Ascending aorta (tissue), 2 donors: ENCODE measurements at regions of chr5 and their contacts with region 1.

Region 1: DNA sequence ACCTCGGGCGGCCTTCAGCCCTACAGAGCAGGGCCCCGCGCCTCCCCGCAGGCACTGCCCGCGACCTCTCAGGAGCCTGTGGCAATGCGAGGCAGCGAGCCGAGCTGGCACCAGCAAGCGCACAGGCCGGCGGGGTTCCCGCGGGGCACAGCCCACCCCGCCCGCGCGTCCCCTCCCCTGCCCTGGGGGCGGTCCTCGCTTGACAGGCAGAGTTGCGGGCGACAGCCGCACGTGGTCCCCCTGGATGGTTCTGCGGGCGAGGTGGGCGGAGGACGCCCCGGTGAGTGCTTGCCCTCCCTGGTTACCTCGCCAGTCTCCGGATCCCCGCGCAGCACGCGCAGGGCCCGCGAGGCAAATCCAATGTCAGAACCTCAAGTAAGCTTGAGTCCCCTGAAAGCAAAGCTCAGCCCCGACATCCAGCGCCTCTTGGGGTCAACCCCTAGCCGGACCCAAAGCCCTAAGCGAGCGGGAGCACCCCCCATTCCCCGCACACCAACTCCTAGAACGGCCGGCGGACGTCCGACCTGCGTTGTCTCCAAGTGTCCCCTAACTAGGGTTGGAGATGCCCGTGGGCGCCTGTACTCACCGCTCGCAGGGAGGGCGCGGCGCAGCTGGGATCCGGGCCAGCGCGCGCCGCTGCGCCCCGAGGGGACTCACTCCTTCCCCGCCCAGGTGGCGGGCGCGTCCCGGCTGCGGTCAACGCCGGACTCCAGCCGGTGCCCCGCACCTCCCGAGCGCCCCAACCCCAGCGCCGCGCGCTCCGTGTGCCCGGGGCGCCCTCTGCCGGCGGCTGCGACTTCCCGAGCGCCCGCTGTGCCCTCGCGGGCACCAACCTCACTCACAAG is at the start of gene DRD1:
- DNase-seq: no peak
- H3K4me3 ChIP-seq: peak within 1 kb of the TSS; percentile 62 to 73
- H3K27ac ChIP-seq: no peak within 1 kb of the TSS
- H3K4me1 ChIP-seq: peaks cover 3 to 5% of the 10 kb centered on the region in 2 donors
- H3K27me3 ChIP-seq: peaks cover 6% of the 10 kb centered on the region
- CTCF ChIP-seq: peak; percentile 57 to 71 (median 68)
- total RNA-seq, gene DRD1: 0.11 TPM

Region 2: DNA sequence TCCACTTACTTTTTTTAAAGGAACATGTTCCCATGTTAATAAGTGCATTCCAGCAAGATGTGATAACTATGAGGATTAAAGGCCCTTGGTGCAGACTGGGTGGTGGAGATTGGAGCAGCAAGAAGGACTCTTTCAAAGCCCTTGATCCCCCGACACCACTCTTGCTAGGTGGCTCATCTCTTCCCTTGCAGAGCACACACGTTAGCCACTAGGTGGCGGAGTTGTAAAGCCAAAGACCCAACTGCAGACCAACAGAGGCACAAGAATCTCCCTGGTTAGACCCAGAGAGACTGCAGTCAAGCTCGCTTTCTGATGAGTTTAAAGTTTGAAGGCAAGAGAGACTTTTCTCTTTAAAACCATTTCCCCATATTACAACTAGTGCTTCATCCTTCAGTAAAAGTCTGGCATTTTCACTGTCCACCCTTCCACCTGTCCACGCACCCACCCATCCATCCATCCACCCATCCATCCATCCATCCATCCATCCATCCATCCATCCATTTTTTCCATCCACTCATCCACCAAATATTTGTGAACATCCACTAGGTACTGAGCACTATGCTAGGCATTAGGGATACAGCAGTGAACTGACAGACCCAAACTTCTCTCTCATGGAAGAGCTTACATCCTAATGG is 493.0 kb before region 1 on chr5:
- intact Hi-C with region 1: loop called (anchors 1 kb)
- DNase-seq: peak in 1 of 2 donors; percentile 69
- H3K4me3 ChIP-seq: no peak overlapping the region
- H3K27ac ChIP-seq: no peak overlapping the region
- H3K4me1 ChIP-seq: peaks cover 0 to 3% of the 10 kb centered on the region in 2 donors
- H3K27me3 ChIP-seq: no peaks in the 10 kb centered on the region
- CTCF ChIP-seq: peak; percentile 70 to 84 (median 82)

Region 3: DNA sequence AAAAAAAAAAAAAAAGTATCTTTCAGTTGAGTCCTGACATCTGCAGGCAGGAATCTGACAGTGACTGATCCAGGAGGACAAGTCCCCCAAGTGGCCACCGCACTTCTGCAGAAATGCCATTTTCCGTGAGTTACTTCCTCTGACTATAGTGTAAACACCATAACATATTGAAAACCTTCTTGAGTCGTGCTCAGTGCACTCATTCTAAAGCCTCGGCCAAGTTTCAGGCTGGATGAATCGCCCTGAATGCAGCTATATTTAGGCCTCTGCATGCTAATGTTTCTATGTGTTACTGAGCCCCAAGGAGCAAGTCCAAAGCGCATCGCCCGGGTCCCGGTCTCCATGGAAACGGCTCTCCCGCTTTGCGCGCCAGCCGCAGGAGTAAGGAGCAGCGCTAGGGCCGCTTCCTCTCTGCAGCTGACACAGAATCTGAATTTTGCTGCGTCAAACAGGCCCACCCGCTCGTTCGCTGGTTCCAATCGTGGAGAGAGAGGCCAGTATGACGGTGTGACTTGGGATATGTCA is 384.5 kb before region 1 on chr5:
- intact Hi-C with region 1: loop called (anchors 10 kb)
- DNase-seq: peak in 1 of 2 donors; percentile 78
- H3K4me3 ChIP-seq: peak overlapping the region; percentile 42 to 54
- H3K27ac ChIP-seq: peak overlapping the region; percentile 59 to 65
- H3K4me1 ChIP-seq: peaks cover 0 to 4% of the 10 kb centered on the region in 2 donors
- H3K27me3 ChIP-seq: no peaks in the 10 kb centered on the region
- CTCF ChIP-seq: no peak

Region 4: GRCh38 chr5:175418285-175418684 is 26.0 kb before region 1 on chr5:
- intact Hi-C with region 1: no loop called
- DNase-seq: no peak
- H3K4me3 ChIP-seq: no peak overlapping the region
- H3K27ac ChIP-seq: no peak overlapping the region
- H3K4me1 ChIP-seq: no peaks in the 10 kb centered on the region
- H3K27me3 ChIP-seq: no peaks in the 10 kb centered on the region
- CTCF ChIP-seq: no peak

Region 5: DNA sequence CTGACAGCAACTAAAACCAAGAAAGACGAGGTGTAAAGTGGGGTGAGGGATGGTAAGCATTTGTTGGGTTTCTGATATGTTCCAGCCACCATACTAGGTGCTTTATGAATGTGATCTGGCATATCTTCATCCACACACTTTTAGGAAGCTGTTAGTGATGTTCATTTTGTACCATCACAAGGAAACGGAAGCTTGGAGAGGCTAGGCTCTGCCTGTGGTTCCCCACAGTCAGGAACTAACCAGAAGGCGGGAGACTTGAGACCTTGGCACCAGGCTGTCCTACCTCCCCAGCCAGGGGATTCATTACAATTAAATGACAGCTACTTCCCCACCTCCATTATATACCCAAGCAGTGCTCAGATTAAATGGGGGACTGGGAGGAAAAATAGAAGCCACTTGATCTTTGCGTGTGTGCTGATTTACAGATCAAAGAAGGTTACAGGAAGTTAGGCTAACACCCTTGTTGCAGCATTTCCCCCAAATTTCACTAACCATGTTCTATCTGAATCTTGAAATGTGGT is 77.1 kb after region 1 on chr5:
- intact Hi-C with region 1: no loop called
- DNase-seq: no peak
- H3K4me3 ChIP-seq: no peak overlapping the region
- H3K27ac ChIP-seq: no peak overlapping the region
- H3K4me1 ChIP-seq: no peaks in the 10 kb centered on the region
- H3K27me3 ChIP-seq: no peaks in the 10 kb centered on the region
- CTCF ChIP-seq: no peak